ENCODE measurements at regions of chr1 and their contacts with region 1.

Region 1: GRCh38 chr1:203769505-203770343 is 4.7 kb downstream of the LAX1 start:
- DNase-seq: no peak
- H3K4me3 Mint-ChIP-seq: no peak overlapping the region
- H3K27ac Mint-ChIP-seq: no peak overlapping the region
- H3K4me1 Mint-ChIP-seq: peaks cover 17% of the 10 kb centered on the region
- H3K27me3 Mint-ChIP-seq: no peaks in the 10 kb centered on the region

Region 2: GRCh38 chr1:203682473-203683383 is 87.0 kb before region 1 on chr1:
- CTCF ChIA-PET with region 1: no interaction called
- POLR2A ChIA-PET with region 1: interaction called, 8 read pairs
- intact Hi-C with region 1: loop called (anchors 5 kb)
- DNase-seq: peak; percentile 78
- H3K4me3 Mint-ChIP-seq: peak overlapping the region; percentile 24
- H3K27ac Mint-ChIP-seq: peak overlapping the region; percentile 89
- H3K4me1 Mint-ChIP-seq: peaks cover 50% of the 10 kb centered on the region
- H3K27me3 Mint-ChIP-seq: no peaks in the 10 kb centered on the region

Region 3: DNA sequence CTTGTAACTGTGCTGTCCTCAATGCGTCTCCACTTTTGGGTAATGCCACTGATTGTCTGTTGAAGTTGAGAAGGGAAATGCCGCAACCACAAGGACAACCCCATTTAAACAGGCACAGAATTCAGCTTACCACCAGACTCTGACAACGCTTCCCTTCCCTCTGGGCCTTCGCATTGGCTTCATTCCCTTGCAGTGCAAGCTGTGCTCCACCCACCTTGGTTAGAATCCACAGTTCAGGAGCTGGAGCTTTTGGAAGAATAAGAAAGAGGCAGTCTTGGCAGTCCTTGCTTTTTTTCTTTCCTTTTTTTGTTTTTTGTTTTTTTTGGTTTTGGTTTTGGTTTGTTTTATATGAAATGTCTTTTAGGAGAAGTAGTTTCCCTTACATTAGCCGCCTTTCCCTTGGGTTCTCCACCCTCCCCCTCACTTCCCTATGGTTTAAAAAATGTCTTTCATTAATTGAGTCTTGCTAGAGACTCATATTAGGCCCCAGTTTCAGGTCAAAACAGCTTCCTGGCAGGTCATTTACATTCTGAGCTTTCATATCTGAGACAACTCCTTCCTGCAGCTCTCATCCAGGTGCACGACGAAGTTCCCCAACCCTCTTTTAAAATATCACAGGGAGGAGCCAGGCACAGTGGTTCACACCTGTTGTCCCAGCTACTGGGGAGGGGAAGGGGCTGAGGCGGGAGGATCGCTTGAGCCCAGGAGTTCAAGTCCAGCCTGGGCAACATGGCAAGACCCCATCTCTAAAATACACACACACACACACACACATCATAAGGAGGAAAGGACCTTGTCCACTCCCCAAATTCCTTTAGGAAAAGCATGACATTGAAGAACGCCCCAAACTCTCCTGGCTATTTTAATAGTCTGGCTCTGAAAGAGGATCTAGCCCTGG is 25.4 kb before region 1 on chr1:
- CTCF ChIA-PET with region 1: no interaction called
- POLR2A ChIA-PET with region 1: interaction called, 7 read pairs
- intact Hi-C with region 1: loop called (anchors 2 kb)
- DNase-seq: peak; percentile 38
- H3K4me3 Mint-ChIP-seq: peak overlapping the region; percentile 17
- H3K27ac Mint-ChIP-seq: peak overlapping the region; percentile 78
- H3K4me1 Mint-ChIP-seq: peaks cover 21% of the 10 kb centered on the region
- H3K27me3 Mint-ChIP-seq: no peaks in the 10 kb centered on the region

Region 4: GRCh38 chr1:203795441-203796235 is 25.9 kb after region 1 on chr1 and contains the starts of genes ZBED6 and ZC3H11A:
- CTCF ChIA-PET with region 1: no interaction called
- POLR2A ChIA-PET with region 1: interaction called, 18 read pairs
- intact Hi-C with region 1: loop called (anchors 1 kb)
- DNase-seq: peak; percentile 99
- H3K4me3 Mint-ChIP-seq: peak within 1 kb of the TSS; percentile 95
- H3K27ac Mint-ChIP-seq: peak within 1 kb of the TSS; percentile 96
- H3K4me1 Mint-ChIP-seq: peaks cover 46% of the 10 kb centered on the region
- H3K27me3 Mint-ChIP-seq: no peaks in the 10 kb centered on the region
- total RNA-seq, gene ZBED6: 18.6 to 20.4 TPM
- total RNA-seq, gene ZC3H11A: 90.2 to 91.8 TPM

Region 5: DNA sequence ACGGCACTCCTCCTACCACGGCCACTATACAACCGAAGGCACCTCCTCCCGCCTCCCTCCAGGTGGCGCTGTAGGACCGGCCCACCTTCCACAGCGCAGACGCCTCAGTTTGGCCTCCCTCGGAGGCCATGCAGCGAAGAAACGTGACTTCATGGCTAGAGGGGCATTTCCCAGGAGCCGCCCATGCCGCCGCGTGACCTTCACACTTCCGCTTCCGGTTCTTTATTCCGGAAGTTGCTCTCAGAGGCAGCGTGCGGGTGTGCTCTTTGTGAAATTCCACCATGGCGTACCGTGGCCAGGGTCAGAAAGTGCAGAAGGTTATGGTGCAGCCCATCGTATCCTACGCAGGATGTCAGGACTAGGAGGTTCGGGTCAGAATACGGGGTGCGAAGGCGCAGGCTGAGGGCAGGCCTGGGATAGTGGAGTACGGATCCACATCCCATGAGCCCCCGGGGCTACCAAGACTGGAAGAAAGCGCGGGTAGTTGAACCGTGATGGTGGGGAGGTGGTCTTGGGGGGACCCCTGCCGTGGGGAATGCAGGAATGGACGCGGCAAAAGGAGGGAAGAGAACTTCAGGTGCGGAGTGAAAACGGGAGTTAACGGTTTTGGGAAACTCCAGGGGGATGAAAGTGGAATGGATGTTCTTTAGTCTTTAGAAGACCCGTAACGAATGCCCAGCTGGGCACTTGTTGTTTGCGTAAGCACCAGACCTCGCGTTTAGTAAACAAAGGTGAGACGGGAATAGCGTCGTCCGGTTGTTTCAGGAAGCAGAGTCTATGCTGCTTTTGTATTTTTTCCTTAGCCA is 91.9 kb after region 1 on chr1 and contains the start of gene SNRPE:
- CTCF ChIA-PET with region 1: no interaction called
- POLR2A ChIA-PET with region 1: no interaction called
- intact Hi-C with region 1: loop called (anchors 1 kb)
- DNase-seq: peak; percentile 98
- H3K4me3 Mint-ChIP-seq: peak within 1 kb of the TSS; percentile 93
- H3K27ac Mint-ChIP-seq: peak within 1 kb of the TSS; percentile 90
- H3K4me1 Mint-ChIP-seq: peaks cover 10% of the 10 kb centered on the region
- H3K27me3 Mint-ChIP-seq: no peaks in the 10 kb centered on the region
- total RNA-seq, gene SNRPE: 327 to 339 TPM